PC-9 (cell line): ENCODE measurements at regions of chr2 and their contacts with region 1.

Region 1: DNA sequence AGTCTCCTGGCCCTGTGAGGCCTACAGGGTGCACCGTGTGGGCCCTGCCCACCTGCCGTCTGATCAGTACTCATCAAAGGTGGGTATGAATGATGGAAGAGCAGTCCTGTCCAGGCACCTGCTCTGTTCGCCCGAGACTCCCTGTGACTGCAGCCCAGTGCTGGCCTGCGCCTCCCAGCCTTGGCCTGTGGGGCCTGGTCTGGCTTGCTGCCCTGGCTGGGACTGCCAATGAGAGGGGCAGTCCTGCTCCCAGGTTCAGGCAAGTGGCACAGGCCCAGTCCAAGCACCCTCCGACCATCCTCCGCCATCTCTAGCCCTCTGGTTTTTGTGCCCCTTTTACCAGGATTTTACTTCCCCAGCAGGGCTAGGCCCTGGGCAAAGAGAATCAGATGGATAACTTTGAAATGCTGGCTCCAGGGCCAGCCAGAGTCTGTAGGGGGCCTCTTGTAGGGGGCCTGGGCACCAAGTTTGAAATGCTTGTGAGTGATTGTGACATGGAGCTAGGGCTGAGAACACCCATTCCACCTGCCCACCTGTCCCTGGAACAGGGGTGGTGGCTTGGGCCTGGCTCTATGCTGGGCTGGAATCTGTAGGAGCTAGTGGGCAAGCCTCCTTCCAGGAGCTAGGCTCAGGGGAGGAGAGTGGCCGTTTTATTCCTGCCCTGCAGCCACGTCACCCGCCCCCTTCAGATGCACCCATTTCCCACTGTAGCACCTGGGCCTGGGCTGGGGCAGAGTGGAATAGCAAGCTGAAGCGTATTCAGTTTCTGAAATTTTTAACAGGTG is 8.7 kb upstream of the HS6ST1 start:
- DNase-seq: no peak
- H3K4me3 ChIP-seq: no peak overlapping the region
- H3K27ac ChIP-seq: no peak overlapping the region
- H3K4me1 ChIP-seq: no peaks in the 10 kb centered on the region
- H3K27me3 ChIP-seq: no peaks in the 10 kb centered on the region
- CTCF ChIP-seq: no peak

Region 2: DNA sequence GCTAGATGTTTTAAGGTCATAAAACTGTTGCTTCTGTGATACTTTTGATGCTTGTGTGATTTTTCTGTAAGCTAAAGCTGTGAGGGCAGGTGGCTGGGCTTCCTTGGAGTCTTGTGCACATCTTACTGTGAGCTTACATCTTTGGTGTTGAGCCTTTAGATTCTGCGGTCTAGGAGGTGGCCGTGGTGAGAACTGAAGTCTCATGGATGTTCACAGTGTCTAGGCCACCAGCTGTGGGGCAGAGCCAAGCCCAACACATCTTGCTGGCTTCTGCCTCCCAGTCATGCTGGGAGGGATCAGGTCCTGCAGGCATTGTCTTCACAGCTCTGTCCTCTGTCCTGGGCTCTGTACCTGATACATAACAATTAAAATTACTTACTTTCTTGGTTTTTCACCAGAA is 211.0 kb after region 1 on chr2:
- CTCF ChIA-PET with region 1: no interaction called
- POLR2A ChIA-PET with region 1: interaction called, 11 read pairs
- intact Hi-C with region 1: no loop called
- DNase-seq: no peak
- H3K4me3 ChIP-seq: no peak overlapping the region
- H3K27ac ChIP-seq: no peak overlapping the region
- H3K4me1 ChIP-seq: peaks cover 26% of the 10 kb centered on the region
- H3K27me3 ChIP-seq: no peaks in the 10 kb centered on the region
- CTCF ChIP-seq: no peak